ENCODE measurements at regions of chr7 and their contacts with region 1.

Region 1: DNA sequence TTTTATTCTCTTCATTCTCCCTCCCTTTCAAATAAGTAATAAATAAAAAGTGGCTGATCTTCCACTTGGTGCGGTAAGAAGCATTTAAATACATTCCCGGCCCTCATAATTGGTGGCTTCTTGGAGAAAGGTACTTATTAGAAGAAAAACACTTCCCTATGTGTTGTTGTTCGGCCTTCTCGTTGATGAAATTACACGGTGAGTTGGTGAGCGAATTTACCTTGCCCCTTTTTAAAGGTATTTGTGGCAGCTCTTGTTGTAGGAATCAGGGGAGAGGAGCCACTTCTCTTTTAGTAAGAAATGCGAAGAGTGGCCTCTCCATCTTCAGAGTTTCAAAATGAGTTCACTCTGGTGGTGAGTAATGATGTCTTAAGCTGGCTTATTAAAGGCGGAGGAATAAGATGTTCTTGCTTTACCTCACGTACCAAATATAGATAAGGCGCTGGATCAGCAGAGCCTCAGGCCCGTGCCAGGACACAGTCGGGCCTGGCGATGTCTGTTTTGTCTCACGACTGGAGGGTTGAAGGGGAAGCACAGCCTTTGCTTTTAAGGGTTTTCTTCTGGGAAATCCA is 135.9 kb downstream of the CUX1 start:
- DNase-seq: peak in 1 of 2 donors; percentile 83
- H3K4me3 ChIP-seq: no peak overlapping the region
- H3K27ac ChIP-seq: peak overlapping the region; percentile 58 to 82
- H3K4me1 ChIP-seq: peaks cover 4 to 31% of the 10 kb centered on the region in 2 donors
- H3K27me3 ChIP-seq: no peaks in the 10 kb centered on the region
- CTCF ChIP-seq: no peak

Region 2: GRCh38 chr7:102009628-102010027 is 56.3 kb after region 1 on chr7:
- intact Hi-C with region 1: loop called (anchors 5 kb)
- DNase-seq: no peak
- H3K4me3 ChIP-seq: no peak overlapping the region
- H3K27ac ChIP-seq: peak overlapping the region; percentile 61 to 73
- H3K4me1 ChIP-seq: peaks cover 0 to 11% of the 10 kb centered on the region in 2 donors
- H3K27me3 ChIP-seq: no peaks in the 10 kb centered on the region
- CTCF ChIP-seq: no peak

Region 3: DNA sequence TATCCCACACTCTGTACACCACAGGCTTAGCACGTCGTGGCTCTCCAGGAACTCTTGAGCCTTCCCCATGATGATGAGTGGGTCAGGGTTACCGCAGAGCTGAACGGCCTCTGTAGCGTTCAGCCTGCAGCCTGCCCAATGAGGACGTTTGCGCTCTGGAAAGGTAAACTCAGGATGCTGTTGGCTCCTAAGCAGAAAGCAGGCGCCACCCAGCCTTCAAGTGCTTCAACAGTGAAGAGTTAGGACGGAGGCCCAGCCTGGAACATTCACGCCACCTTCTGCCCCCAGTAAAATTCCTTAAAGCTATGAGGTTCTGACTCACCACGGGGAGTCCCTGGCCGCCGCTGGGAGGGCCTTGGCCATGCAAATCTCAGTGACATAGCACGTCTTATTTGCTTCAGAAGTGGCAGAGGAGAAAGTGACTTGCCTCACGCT is 171.8 kb after region 1 on chr7:
- intact Hi-C with region 1: loop called (anchors 10 kb)
- DNase-seq: peak; percentile 68 to 92
- H3K4me3 ChIP-seq: no peak overlapping the region
- H3K27ac ChIP-seq: peak overlapping the region; percentile 70 to 74
- H3K4me1 ChIP-seq: peaks cover 0 to 14% of the 10 kb centered on the region in 2 donors
- H3K27me3 ChIP-seq: no peaks in the 10 kb centered on the region
- CTCF ChIP-seq: peak in 2 of 3 experiments; percentile 23 to 40

Measured in ascending aorta (tissue), 2 donors.